Mammary epithelial cell (primary cell): ENCODE measurements at regions of chr1 and their contacts with region 1.

Region 1: GRCh38 chr1:162765788-162766187 is 24.7 kb upstream of the HSD17B7 start:
- DNase-seq: peak; percentile 29
- H3K4me3 ChIP-seq: no peak overlapping the region
- H3K27ac ChIP-seq: no peak overlapping the region
- H3K4me1 ChIP-seq: no peaks in the 10 kb centered on the region
- H3K27me3 ChIP-seq: no peaks in the 10 kb centered on the region
- CTCF ChIP-seq: no peak

Region 2: DNA sequence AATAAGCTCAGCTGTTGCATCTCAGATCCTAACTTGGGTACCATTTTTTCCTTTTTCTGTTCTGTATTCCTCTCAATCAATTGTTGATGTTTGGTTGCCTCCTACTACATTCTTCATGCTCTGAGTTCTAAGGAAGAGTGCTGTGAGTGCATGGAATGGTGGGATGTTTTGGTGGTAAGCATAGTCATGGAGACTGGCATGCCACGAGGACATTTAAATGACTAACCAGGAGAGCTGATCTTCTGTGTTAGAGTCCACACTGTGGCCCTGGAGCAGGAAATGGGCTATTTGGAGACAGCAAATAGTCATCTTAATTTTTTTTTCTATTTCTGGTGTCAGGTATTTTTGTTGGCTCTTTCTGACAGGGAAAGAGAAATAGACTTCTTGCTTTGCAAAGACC is 44.8 kb before region 1 on chr1:
- CTCF ChIA-PET with region 1: no interaction called
- dilution Hi-C with region 1: no loop called
- in situ Hi-C with region 1: no loop called
- intact Hi-C with region 1: loop called (anchors 5 kb)
- DNase-seq: no peak
- H3K4me3 ChIP-seq: no peak overlapping the region
- H3K27ac ChIP-seq: no peak overlapping the region
- H3K4me1 ChIP-seq: no peaks in the 10 kb centered on the region
- H3K27me3 ChIP-seq: no peaks in the 10 kb centered on the region
- CTCF ChIP-seq: no peak